Posterior vena cava (tissue), 2 donors: ENCODE measurements at regions of chr4 and their contacts with region 1.

Region 1: DNA sequence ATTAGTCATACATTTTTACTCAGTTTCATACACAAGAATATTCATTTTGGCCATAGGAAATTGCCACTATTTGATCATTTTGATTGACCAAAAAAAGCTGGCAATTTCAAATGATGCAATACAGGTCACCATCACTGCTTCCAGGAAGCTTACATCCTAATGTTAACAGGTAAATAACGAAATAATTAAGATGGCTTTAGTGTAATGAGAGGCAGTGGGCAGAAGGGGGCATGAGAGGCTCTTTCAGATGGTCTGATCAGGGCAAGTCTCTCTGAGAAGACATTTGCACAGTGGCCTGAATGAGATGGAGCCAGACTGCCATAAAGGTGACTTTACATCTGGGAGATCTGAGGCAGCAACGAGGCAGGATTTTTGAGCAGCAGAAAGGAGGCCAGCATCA is 170.7 kb downstream of the SLIT2 start:
- DNase-seq: no peak

Region 2: DNA sequence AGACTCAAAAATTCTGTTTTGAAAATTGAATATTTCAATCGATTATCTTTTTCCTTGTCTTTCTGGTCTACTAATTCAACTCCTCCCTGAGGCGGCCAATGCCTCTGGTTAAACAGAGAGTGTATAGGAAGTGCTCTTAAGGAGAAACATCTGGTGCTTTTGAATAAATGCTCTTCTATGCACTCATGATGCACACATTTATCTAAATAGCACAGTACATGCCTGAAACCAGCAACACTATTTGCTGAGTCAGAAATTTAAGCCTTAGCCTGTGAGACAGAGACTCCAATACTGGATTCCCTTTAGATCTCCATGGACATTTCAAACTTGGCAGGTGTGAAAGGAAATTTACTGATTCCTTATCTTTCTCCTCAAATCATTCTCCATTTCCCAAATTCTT is 52.1 kb before region 1 on chr4:
- intact Hi-C with region 1: no loop called
- DNase-seq: no peak

Region 3: DNA sequence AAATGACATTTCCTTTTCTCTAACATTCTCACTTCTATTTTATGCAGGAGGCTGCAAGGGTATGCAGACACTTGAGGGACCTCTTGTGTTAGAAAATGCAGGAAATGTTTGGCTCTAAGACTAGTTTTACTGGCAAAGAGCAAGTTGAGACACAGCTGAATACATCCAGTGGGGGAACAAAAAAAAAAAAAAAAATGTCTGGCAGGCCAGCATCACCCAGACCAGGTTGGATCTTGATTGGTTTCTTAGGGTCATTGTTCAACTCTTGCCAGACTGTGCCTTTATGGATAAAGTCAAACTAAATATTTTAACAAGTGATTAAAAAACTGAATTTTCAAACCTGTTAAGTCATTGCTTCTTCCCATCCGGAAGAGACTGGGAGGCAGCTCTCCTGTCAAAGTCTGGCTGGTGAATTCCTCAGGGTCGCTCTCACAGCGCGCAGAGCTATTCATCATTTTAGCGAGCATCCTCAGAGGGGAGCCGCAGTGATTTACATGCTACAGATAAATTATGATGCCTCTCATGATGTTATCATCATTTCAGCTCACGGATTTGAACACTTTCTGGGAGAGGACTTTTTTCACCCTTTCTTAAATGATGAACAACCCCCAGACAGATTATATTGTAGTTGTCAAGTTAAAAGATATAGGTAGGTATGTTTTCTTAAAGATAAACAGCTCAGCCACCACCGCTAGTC is 254.3 kb after region 1 on chr4:
- intact Hi-C with region 1: loop called in 1 of 2 experiments (anchors 5 kb)
- DNase-seq: no peak